Sigmoid colon (tissue), 7 donors: ENCODE measurements at regions of chr20 and their contacts with region 1.

Region 1: DNA sequence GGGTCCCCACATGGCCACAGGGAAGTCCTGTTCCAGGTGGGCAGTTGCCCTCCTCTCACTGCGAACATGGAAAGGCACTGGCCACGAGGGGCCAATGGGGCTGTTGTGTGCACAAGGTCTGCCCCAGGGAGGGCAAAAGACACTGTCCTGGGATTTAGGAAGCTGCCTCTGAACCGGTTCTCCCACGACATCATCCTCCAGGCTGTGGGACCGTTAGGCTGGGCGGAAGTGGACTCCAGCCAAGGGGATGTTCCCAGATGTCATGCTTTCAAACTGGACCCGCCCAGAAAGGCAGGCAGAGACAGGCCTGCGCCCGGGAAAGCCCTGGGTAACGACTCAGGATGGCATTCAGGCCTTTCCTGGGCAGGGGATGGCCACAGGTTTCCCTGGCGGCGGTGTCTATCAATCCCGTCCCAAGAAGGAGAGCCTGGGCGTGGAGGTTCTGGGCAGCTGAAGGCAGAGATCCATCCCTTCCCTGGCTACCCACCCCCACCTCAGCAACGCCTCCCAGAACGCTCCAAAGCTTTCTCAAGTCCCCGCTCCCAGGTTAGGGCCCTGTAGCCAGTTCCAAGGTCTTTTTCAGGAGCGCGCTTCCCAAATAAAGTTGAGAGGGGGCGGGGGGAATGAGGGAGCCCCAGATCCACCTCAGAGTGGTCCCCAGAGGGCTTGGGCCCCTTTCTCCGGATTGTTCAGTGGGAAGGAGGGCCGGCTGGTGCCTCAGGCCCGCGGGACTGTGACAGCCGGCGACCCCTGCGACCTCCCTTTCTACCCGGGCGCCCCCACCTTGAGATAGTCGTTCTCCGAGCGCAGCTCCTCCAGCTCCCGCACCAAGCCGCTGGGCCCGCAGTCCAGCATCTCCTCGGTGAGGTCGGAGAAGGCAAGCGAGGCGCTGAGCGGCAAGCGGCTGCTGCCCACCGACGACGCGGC is 13.8 kb upstream of the TLDC2 start:
- DNase-seq: peak; percentile 98
- H3K4me3 ChIP-seq: peak overlapping the region; percentile 65 to 82 (median 73)
- H3K27ac ChIP-seq: peak overlapping the region; percentile 96 to 99 (median 98)
- H3K4me1 ChIP-seq: peaks cover 0 to 59% (median 59%) of the 10 kb centered on the region in 4 donors
- H3K27me3 ChIP-seq: no peaks in the 10 kb centered on the region
- CTCF ChIP-seq: no peak
- EP300 ChIP-seq: peak in 1 of 4 donors; percentile 26
- POLR2A ChIP-seq: peak; percentile 71 to 87

Region 2: DNA sequence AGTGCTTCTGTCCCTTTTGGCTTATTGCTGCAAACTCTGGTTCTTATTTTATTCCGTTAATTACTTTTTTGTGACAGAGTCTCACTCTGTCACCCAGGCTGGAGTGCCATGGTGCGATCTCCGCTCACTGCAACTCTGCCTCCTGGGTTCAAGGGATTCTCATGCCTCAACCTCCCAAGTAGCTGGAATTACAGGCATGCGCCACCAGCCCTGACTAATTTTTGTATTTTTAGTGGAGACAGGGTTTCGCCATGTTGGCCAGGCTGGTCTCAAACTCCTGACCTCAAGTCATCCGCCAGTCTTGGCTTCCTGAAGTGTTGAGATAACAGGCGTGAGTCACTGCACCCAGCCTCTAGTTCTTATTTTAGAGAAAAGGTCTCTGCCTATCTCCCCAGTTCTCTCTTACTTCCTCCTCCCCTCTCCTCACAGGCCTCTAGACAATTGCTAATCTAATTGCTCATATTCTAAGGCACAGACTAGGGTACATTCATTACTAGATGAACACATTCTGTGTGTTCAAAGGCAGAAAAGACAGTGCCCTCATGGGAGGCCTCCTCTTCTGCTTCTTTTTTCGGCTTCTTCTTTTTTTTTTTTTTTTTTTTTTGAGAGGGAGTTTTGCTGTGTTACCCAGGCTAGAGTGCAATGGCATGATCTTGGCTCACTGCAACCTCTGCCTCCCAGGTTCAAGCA is 1742.0 kb before region 1 on chr20:
- intact Hi-C with region 1: no loop called
- DNase-seq: no peak
- H3K4me3 ChIP-seq: no peak overlapping the region
- H3K27ac ChIP-seq: no peak overlapping the region
- H3K4me1 ChIP-seq: no peaks in the 10 kb centered on the region
- H3K27me3 ChIP-seq: no peaks in the 10 kb centered on the region
- CTCF ChIP-seq: no peak
- EP300 ChIP-seq: no peak
- POLR2A ChIP-seq: no peak

Region 3: DNA sequence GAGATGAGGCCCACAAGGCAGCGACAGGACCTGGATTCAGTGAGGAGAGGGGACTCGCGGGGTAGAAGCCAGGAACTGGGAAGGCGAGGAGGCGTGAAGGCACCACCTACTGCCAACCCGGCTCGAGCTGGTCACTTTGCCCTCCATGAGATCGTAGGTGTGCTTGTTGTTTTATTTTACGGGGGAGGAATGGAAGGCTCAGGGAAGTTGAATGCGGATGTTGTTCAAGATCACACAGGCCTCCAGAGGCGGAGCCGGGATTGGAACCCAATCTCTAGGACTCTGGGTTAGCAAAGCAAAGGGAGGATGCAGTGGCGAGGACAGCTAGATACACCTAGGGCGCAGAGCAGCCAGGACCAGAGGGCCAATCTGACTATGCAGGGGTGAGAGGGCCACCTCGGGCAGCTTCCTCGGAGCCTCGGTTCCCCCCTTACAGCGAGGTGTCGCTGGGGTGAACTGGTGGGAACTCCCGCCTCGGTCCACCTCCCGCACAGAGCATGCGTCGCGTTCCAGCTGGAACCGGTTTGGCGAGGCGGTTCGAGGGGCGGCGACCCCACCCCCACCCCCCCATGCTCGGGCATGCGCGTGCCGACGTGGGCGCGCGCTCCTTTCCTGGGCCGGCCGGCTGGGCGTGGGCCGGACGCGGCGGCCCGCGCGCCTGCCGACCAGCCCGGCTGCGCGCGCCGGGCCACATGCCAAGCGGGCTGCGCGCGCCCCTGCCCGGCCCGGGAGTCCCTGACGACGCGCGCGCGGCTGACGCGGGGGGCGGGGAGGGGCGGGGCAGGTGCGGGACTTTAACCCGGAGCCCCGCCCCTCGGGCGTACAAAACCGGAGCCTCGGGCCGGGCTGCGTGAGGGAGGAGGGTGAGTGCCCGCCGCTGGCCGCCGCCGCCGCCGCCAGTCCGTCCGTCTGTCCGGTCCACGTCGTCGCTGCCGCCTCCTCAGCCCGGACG is 401.2 kb before region 1 on chr20:
- intact Hi-C with region 1: loop called (anchors 10 kb)
- DNase-seq: peak; percentile 96
- H3K4me3 ChIP-seq: peak overlapping the region; percentile 65 to 88 (median 81)
- H3K27ac ChIP-seq: peak overlapping the region; percentile 93 to 99 (median 98)
- H3K4me1 ChIP-seq: peaks cover 0 to 43% (median 38%) of the 10 kb centered on the region in 4 donors
- H3K27me3 ChIP-seq: no peaks in the 10 kb centered on the region
- CTCF ChIP-seq: no peak
- EP300 ChIP-seq: peak in 1 of 4 donors; percentile 23
- POLR2A ChIP-seq: peak; percentile 23 to 28

Region 4: GRCh38 chr20:36745927-36746659 is 116.0 kb before region 1 on chr20 and contains the start of gene NDRG3:
- intact Hi-C with region 1: loop called (anchors 5 kb)
- DNase-seq: peak; percentile 98
- H3K4me3 ChIP-seq: peak within 1 kb of the TSS; percentile 83 to 99 (median 94)
- H3K27ac ChIP-seq: peak within 1 kb of the TSS; percentile 71 to 84 (median 83)
- H3K4me1 ChIP-seq: peaks cover 0 to 24% (median 19%) of the 10 kb centered on the region in 4 donors
- H3K27me3 ChIP-seq: no peaks in the 10 kb centered on the region
- CTCF ChIP-seq: no peak
- EP300 ChIP-seq: no peak
- POLR2A ChIP-seq: no peak
- total RNA-seq, gene NDRG3: 28.5 to 38.9 (median 31.5) TPM

Region 5: DNA sequence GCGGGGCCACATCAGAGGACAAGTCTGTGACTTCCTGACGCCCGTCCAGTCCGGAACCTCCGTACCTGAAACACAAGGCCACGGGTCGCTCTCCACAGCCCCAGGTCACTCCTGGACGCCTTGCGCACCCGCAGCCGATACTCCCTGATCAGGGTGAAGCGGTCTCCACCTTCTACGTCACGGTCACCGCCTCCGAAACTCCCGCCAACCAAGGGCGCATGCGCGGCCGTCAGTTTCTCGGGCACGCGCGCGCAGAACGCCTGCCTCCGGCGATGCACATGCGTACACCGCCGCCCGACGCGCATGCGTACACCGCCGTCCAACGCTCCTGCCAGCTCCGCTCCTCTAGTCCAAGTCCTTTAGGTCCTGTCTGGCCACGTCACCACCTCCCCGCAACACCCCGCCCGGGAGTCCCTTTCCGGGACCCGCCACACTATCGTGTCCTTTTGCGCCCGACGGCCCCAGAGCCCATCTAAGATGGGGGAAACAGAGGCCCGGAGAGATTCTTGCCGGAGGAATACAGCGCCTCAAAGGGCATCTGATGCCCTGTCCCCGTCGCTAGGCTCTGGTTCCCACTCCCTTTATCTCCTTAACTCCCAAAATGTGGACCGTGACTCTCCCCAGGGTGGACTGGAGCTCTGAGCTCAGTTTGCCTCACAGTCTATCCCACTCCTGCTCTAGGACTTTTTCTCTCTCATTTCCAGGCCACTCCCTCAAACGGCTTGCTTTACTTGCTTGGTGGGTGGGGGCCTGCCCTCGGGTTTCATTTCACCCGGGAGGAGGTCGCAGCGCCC is 88.3 kb before region 1 on chr20 and contains the start of gene DSN1:
- intact Hi-C with region 1: loop called (anchors 5 kb)
- DNase-seq: peak; percentile 99
- H3K4me3 ChIP-seq: peak within 1 kb of the TSS; percentile 58 to 79 (median 73)
- H3K27ac ChIP-seq: peak within 1 kb of the TSS; percentile 93 to 97 (median 95)
- H3K4me1 ChIP-seq: peaks cover 0 to 34% (median 26%) of the 10 kb centered on the region in 4 donors
- H3K27me3 ChIP-seq: no peaks in the 10 kb centered on the region
- CTCF ChIP-seq: peak in 1 of 4 experiments; percentile 51
- EP300 ChIP-seq: no peak
- POLR2A ChIP-seq: peak; percentile 28 to 77
- total RNA-seq, gene DSN1: 4.4 to 6.4 (median 5.5) TPM

Region 6: DNA sequence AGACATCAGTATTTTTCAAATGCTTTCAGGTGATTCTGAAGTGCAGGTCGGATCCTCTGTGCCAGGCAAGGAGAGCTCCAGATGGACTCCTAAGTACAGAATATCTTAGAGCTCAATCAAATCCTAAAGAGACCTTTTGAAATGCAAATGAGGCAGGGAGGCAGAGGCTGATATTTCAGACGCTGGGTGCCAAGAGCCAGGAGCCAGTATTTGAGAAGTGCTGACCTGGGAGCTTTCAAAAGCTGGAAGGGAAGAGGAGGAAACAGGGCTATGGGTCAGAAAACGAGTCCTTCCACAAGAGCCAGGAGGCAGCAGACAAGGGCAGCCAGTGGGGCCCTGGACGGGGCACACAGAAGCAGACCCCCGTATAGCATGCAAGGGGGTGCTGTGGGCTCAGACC is 42.5 kb before region 1 on chr20:
- intact Hi-C with region 1: loop called (anchors 10 kb)
- DNase-seq: no peak
- H3K4me3 ChIP-seq: no peak overlapping the region
- H3K27ac ChIP-seq: peak overlapping the region; percentile 53 to 79 (median 75)
- H3K4me1 ChIP-seq: peaks cover 0 to 49% (median 39%) of the 10 kb centered on the region in 4 donors
- H3K27me3 ChIP-seq: no peaks in the 10 kb centered on the region
- CTCF ChIP-seq: no peak
- EP300 ChIP-seq: no peak
- POLR2A ChIP-seq: no peak

Region 7: GRCh38 chr20:36835453-36836198 is 26.5 kb before region 1 on chr20:
- intact Hi-C with region 1: loop called (anchors 2 kb)
- DNase-seq: peak; percentile 98
- H3K4me3 ChIP-seq: peak overlapping the region in 3 of 4 donors; percentile 12 to 26 (median 21)
- H3K27ac ChIP-seq: peak overlapping the region; percentile 78 to 86 (median 86)
- H3K4me1 ChIP-seq: peaks cover 2 to 67% (median 64%) of the 10 kb centered on the region in 4 donors
- H3K27me3 ChIP-seq: no peaks in the 10 kb centered on the region
- CTCF ChIP-seq: no peak
- EP300 ChIP-seq: no peak
- POLR2A ChIP-seq: peak; percentile 41 to 64

Region 8: GRCh38 chr20:36847009-36847709 is 15.0 kb before region 1 on chr20:
- intact Hi-C with region 1: loop called (anchors 1 kb)
- DNase-seq: peak; percentile 98
- H3K4me3 ChIP-seq: no peak overlapping the region
- H3K27ac ChIP-seq: peak overlapping the region; percentile 94 to 99 (median 97)
- H3K4me1 ChIP-seq: peaks cover 0 to 87% (median 82%) of the 10 kb centered on the region in 4 donors
- H3K27me3 ChIP-seq: no peaks in the 10 kb centered on the region
- CTCF ChIP-seq: no peak
- EP300 ChIP-seq: peak; percentile 67 to 97 (median 79)
- POLR2A ChIP-seq: peak; percentile 11 to 24

Region 9: GRCh38 chr20:37053230-37053950 is 191.3 kb after region 1 on chr20:
- intact Hi-C with region 1: no loop called
- DNase-seq: no peak
- H3K4me3 ChIP-seq: no peak overlapping the region
- H3K27ac ChIP-seq: no peak overlapping the region
- H3K4me1 ChIP-seq: no peaks in the 10 kb centered on the region
- H3K27me3 ChIP-seq: no peaks in the 10 kb centered on the region
- CTCF ChIP-seq: no peak
- EP300 ChIP-seq: no peak
- POLR2A ChIP-seq: no peak